H1 (cell line): ENCODE measurements at regions of chr20 and their contacts with region 1.

Region 1: GRCh38 chr20:17898548-17898994 is 70.0 kb downstream of the SNX5 start:
- DNase-seq: peak in 1 of 2 experiments; percentile 81
- H3K4me3 ChIP-seq: no peak overlapping the region
- H3K27ac ChIP-seq: no peak overlapping the region
- H3K4me1 ChIP-seq: peaks cover 8 to 19% (median 12%) of the 10 kb centered on the region in 4 experiments
- H3K27me3 ChIP-seq: no peaks in the 10 kb centered on the region; a peak in 1 of 7 replicates
- CTCF ChIP-seq: peak; percentile 82 to 91 (median 88)
- EP300 ChIP-seq: no peak
- POLR2A ChIP-seq: no peak
- RAD21 ChIP-seq: peak; percentile 95 to 96

Region 2: DNA sequence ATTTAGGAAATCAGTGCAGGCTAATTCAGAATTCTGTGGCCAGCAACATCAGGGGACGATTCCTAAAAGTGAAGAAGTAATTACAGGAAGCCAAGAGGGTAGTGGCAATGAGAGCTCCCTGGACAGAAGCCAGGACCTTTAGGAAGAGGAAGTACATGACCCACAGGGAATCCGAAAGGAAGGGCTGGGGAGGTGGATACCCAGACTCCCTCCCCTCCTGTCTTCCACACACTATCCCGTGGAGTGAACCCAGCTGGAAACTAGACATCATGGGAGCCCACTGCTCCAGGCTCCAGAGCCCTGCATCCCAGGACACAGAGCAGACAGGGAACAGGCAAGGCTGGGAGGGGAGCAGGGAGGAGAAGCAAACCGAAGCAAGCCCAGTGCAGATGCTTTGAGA is 13.0 kb before region 1 on chr20:
- CTCF ChIA-PET with region 1: interaction called, 24 read pairs
- POLR2A ChIA-PET with region 1: interaction called, 6 read pairs
- DNase-seq: no peak
- H3K4me3 ChIP-seq: no peak overlapping the region
- H3K27ac ChIP-seq: no peak overlapping the region
- H3K4me1 ChIP-seq: peaks cover 3 to 11% (median 7%) of the 10 kb centered on the region in 4 experiments
- H3K27me3 ChIP-seq: no peaks in the 10 kb centered on the region
- CTCF ChIP-seq: no peak
- EP300 ChIP-seq: no peak
- POLR2A ChIP-seq: no peak
- RAD21 ChIP-seq: no peak

Region 3: GRCh38 chr20:17910828-17911294 is 12.3 kb after region 1 on chr20:
- CTCF ChIA-PET with region 1: interaction called, 17 read pairs
- POLR2A ChIA-PET with region 1: no interaction called
- DNase-seq: no peak
- H3K4me3 ChIP-seq: no peak overlapping the region
- H3K27ac ChIP-seq: no peak overlapping the region
- H3K4me1 ChIP-seq: no peaks in the 10 kb centered on the region
- H3K27me3 ChIP-seq: no peaks in the 10 kb centered on the region
- CTCF ChIP-seq: no peak
- EP300 ChIP-seq: no peak
- POLR2A ChIP-seq: no peak
- RAD21 ChIP-seq: no peak

Region 4: GRCh38 chr20:18048176-18048575 is 149.6 kb after region 1 on chr20:
- CTCF ChIA-PET with region 1: no interaction called
- POLR2A ChIA-PET with region 1: no interaction called
- DNase-seq: no peak
- H3K4me3 ChIP-seq: no peak overlapping the region
- H3K27ac ChIP-seq: no peak overlapping the region
- H3K4me1 ChIP-seq: no peaks in the 10 kb centered on the region
- H3K27me3 ChIP-seq: no peaks in the 10 kb centered on the region
- CTCF ChIP-seq: no peak
- EP300 ChIP-seq: no peak
- POLR2A ChIP-seq: no peak
- RAD21 ChIP-seq: no peak